ENCODE measurements at regions of chr21 and their contacts with region 1.

Region 1: GRCh38 chr21:25881525-25882376 is 147.0 kb downstream of the GABPA start:
- DNase-seq: peak; percentile 78
- H3K4me3 ChIP-seq: no peak overlapping the region
- H3K27ac ChIP-seq: no peak overlapping the region
- H3K4me1 ChIP-seq: no peaks in the 10 kb centered on the region
- H3K27me3 ChIP-seq: no peaks in the 10 kb centered on the region
- CTCF ChIP-seq: peak; percentile 89 to 95 (median 89)
- POLR2A ChIP-seq: no peak

Region 2: GRCh38 chr21:25818121-25818520 is 63.6 kb before region 1 on chr21:
- intact Hi-C with region 1: no loop called
- DNase-seq: no peak
- H3K4me3 ChIP-seq: no peak overlapping the region
- H3K27ac ChIP-seq: no peak overlapping the region
- H3K4me1 ChIP-seq: peaks cover 7% of the 10 kb centered on the region
- H3K27me3 ChIP-seq: no peaks in the 10 kb centered on the region
- CTCF ChIP-seq: no peak
- POLR2A ChIP-seq: no peak

Region 3: DNA sequence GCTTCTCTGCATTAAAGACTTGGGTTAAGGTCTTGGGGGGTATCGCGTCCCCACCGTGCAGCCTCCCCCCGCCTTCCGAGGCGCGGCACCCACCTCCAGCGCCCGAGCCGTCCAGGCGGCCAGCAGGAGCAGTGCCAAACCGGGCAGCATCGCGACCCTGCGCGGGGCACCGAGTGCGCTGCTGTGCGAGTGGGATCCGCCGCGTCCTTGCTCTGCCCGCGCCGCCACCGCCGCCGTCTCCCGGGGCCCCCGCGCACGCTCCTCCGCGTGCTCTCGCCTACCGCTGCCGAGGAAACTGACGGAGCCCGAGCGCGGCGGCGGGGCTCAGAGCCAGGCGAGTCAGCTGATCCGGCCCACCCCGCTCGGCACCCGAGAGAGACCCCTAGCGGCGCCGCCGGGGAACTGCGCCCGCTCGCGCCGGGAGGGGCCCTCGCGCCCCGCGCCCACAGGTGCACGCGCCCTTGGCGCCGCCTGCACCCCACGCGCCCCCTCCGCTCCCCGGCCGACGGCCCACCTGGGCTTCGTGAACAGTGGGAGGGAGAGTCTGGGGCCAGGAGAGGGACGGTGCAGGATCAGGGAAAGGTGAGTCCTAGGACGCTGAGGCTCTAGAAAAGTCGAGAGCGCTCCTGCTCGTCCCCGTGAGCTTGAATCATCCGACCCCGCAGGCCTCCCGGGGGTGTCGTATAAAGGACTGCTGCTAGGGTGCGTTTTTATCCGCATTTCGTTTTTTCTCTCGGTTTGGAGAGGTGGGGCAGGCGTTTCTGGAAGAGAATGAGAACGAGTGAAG is 288.9 kb after region 1 on chr21 and contains the start of gene APP:
- intact Hi-C with region 1: loop called (anchors 10 kb)
- DNase-seq: peak; percentile 90
- H3K4me3 ChIP-seq: peak within 1 kb of the TSS; percentile 95 to 100
- H3K27ac ChIP-seq: peak within 1 kb of the TSS; percentile 96 to 97
- H3K4me1 ChIP-seq: peaks cover 16% of the 10 kb centered on the region
- H3K27me3 ChIP-seq: no peaks in the 10 kb centered on the region
- CTCF ChIP-seq: peak; percentile 97 to 100 (median 100)
- POLR2A ChIP-seq: peak; percentile 25
- total RNA-seq, gene APP: 390 to 670 TPM

Region 4: GRCh38 chr21:26715878-26716506 is 834.2 kb after region 1 on chr21:
- intact Hi-C with region 1: loop called (anchors 10 kb)
- DNase-seq: peak; percentile 76
- H3K4me3 ChIP-seq: no peak overlapping the region
- H3K27ac ChIP-seq: no peak overlapping the region
- H3K4me1 ChIP-seq: no peaks in the 10 kb centered on the region
- H3K27me3 ChIP-seq: no peaks in the 10 kb centered on the region
- CTCF ChIP-seq: peak; percentile 45 to 80 (median 63)
- POLR2A ChIP-seq: no peak

Measured in testis (tissue), 5 donors.